MCF 10A (cell line): ENCODE measurements at regions of chr9 and their contacts with region 1.

Region 1: DNA sequence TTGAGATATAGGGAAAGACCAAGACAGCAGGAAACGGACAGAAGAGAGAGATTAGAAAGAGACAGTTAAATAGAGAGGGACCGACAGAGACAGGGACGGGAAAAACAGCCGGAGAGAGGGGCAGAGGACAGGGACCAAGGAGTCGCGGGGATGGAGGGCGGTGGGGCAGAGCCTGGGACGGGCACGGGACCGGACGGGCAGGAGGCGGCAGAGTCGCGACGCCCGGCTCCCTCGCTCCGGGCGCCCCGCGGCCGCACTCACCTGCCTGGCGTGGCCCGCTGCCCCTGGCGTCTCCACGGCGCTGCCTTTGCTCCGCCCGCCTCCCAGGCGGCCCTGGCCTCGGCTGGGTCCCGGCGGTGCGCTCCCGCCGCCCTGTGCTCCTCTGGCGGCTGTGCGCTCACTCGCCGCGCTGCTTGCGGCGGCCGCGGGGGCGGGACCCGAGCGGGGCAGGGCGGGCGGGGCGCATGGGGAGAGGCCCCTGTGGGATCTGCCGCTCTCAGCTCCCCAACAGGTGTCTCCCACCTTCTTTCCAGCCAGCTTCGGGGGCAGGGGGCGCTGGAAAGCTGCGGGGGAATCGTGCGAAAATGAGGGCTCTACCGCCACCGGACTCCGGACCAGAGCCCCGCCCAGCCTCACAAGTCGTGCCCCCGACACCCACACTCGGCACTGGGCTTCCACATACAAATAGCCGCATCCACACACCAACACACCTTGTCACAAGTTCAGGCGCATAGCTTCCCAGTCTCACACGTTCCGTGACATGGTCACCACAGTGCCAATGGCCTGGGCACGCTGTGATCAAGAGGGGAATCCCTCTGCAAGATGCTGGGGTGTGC is at the start of gene ARID3C:
- DNase-seq: no peak
- H3K4me3 Mint-ChIP-seq: peak within 1 kb of the TSS; percentile 66
- H3K27ac Mint-ChIP-seq: peak within 1 kb of the TSS; percentile 2
- H3K4me1 Mint-ChIP-seq: peaks cover 22% of the 10 kb centered on the region
- H3K27me3 Mint-ChIP-seq: peaks cover 56% of the 10 kb centered on the region
- CTCF ChIP-seq: no peak
- total RNA-seq, gene ARID3C: not detected in 2 replicates

Region 2: GRCh38 chr9:34611829-34612630 is 16.8 kb before region 1 on chr9 and contains the start of gene RPP25L:
- CTCF ChIA-PET with region 1: interaction called, 113 read pairs
- POLR2A ChIA-PET with region 1: interaction called, 10 read pairs
- intact Hi-C with region 1: loop called (anchors 1 kb)
- DNase-seq: peak; percentile 83
- H3K4me3 Mint-ChIP-seq: peak within 1 kb of the TSS; percentile 91
- H3K27ac Mint-ChIP-seq: peak within 1 kb of the TSS; percentile 97
- H3K4me1 Mint-ChIP-seq: peaks cover 14% of the 10 kb centered on the region
- H3K27me3 Mint-ChIP-seq: no peaks in the 10 kb centered on the region
- CTCF ChIP-seq: no peak
- total RNA-seq, gene RPP25L: 41.6 and 42.8 TPM in 2 replicates